ENCODE measurements at regions of chr1 and their contacts with region 1.

Region 1: DNA sequence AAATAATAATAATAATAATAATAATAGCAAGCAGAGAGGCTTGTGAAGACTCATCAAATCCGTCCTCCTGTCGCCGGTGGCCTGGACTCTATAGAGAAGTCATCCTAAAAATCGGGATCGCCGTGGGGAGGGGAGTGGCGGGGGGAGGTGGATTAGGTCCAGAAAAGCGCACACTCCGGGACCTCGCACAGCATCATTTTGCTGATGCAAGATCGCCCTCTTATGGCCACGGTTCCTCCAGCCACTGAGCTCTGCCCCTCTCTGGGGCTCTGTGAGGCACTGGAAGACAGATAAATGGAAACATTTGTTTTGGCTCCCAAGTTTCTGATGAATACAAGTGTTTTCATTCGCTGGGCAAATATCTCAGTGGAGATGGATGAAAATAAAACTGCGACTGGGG is 612.0 kb downstream of the MATN1 start:
- DNase-seq: peak; percentile 46 to 68 (median 58)
- H3K4me3 ChIP-seq: no peak overlapping the region
- H3K27ac ChIP-seq: no peak overlapping the region
- H3K4me1 ChIP-seq: no peaks in the 10 kb centered on the region
- H3K27me3 ChIP-seq: no peaks in the 10 kb centered on the region
- CTCF ChIP-seq: peak in 1 of 3 donors; percentile 25
- EP300 ChIP-seq: no peak
- POLR2A ChIP-seq: no peak

Region 2: DNA sequence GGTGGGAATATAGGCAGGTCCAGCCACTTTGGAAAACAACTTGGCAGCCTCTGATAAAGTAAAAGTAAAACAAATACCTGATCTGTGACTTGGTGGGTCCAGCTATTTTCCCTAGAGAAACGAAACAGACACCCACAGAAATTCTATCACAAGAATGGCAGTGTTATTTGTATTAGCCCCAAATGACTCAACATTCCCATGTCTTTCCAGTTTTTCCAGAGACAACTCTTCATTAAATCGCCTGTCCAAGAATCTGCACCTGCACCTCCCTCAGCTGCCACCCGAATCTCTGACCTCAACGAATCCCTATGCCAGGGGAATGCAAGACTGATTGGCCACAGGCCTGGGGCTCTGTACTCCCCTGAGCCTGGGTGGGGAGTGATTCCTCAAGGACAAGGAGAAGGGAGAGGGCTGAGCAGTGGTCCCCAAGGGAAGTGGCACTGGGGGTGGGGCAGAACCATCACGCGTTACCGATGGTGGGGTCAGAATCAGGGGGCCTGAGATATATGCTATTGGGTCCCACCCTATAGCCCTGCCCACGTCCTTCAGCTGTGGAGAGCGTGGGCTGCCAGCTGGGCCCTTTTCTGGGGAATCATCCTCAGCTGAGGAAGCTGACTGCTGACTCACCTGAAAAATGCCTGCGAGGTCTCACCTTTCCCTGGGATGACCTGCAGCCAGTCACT is 322.1 kb before region 1 on chr1:
- intact Hi-C with region 1: loop called in 1 of 4 experiments (anchors 10 kb)
- DNase-seq: no peak
- H3K4me3 ChIP-seq: no peak overlapping the region
- H3K27ac ChIP-seq: no peak overlapping the region
- H3K4me1 ChIP-seq: no peaks in the 10 kb centered on the region
- H3K27me3 ChIP-seq: no peaks in the 10 kb centered on the region
- CTCF ChIP-seq: no peak
- EP300 ChIP-seq: no peak
- POLR2A ChIP-seq: no peak

Region 3: DNA sequence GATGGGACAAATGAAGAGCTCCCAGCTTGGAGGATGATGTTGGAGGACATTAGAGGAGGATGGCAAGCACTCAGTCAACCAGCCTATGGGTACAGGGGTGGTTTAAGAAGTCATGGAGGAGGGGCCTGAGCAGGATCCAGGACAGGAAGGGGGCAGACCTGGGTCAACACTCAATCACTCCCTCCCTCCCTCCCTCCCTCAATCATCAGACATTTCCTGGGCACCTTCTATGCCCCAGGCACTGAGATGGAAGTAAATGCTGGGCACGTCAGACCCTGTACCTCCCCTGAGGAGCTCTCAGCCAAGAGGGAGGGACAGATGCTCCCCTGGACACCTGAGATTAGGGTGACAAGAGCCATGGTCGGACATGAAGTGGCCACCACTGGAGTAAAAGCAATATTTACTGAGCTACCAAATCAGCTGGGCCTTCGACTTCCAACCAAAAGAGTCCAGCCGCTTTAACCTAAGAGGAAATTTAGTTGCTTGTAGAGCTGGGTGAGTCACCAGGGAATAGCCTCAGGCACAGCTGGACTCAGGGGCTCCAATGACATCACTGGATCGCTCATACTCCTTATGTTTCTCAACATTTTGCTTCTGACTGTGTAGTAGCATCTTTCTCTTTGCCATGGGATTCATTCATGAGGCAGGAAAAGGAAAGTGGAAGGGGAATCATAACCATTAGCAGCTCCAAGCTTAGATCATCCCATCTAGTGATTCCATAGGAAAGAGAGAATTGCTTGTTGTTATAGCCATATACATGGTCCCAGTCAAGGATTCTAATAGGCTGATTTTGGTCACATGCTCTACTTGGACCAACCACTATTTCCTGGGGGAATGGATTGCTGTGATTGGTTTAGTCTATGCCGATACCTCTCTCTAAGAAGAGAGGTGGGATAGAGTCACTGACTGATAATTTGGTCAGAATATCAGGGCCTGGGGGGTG is 52.5 kb before region 1 on chr1:
- intact Hi-C with region 1: no loop called
- DNase-seq: no peak
- H3K4me3 ChIP-seq: no peak overlapping the region
- H3K27ac ChIP-seq: no peak overlapping the region
- H3K4me1 ChIP-seq: no peaks in the 10 kb centered on the region
- H3K27me3 ChIP-seq: no peaks in the 10 kb centered on the region
- CTCF ChIP-seq: no peak
- EP300 ChIP-seq: no peak
- POLR2A ChIP-seq: no peak

Region 4: DNA sequence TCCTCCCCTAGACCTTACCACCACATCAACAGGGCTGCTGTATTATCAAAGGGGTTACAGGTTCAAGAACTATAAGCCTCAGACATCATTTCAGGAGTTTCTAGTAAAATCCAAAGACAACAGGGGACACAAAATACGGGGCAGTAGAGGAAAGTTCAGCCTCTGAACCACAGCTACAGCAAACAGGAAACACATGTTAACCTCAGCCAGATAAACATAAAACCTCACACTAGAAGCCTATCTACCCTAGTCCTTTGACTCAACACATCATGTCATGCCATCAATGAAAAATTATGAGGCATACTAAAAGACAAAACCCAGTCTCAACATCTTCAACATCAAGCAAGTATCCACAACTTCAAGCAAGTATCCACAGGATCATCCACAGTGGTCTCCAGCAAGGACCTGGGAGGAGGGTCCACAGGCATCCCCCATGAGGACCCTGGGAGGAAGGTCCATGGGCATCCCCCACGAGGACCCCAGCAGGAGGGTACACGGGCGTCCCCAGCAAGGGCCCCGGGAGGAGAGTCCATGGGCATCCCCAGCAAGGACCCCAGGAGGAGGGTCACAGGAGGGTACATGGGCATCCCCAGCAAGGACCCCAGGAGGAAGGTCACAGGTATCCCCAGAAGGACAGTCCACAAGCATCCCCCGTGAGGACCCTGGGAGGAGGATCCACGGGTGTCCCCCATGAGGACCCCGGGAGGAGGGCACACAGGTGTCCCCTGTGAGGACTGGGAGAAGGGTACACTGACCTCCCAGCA is 171.9 kb after region 1 on chr1:
- intact Hi-C with region 1: no loop called
- DNase-seq: no peak
- H3K4me3 ChIP-seq: no peak overlapping the region
- H3K27ac ChIP-seq: no peak overlapping the region
- H3K4me1 ChIP-seq: no peaks in the 10 kb centered on the region
- H3K27me3 ChIP-seq: no peaks in the 10 kb centered on the region
- CTCF ChIP-seq: no peak
- EP300 ChIP-seq: no peak
- POLR2A ChIP-seq: no peak

Measured in ovary (tissue), 10 donors.